Naive thymus-derived CD4-positive, alpha-beta T cell (primary cell): ENCODE measurements at regions of chr9 and their contacts with region 1.

Region 1: GRCh38 chr9:37302277-37302676 is 120.2 kb upstream of the GRHPR start:
- DNase-seq: peak in 7 of 9 donors; percentile 26 to 64 (median 54)
- ATAC-seq: peak; percentile 88
- H3K4me3 ChIP-seq: no peak overlapping the region
- H3K4me3 Mint-ChIP-seq: peak overlapping the region; percentile 64 to 78 (median 74)
- H3K27ac ChIP-seq: no peak overlapping the region
- H3K27ac Mint-ChIP-seq: peak overlapping the region; percentile 34 to 89 (median 71)
- H3K4me1 ChIP-seq: peaks cover 25 to 37% of the 10 kb centered on the region in 2 donors
- H3K4me1 Mint-ChIP-seq: peaks cover 31 to 70% (median 58%) of the 10 kb centered on the region in 7 donors
- H3K27me3 ChIP-seq: no peaks in the 10 kb centered on the region
- H3K27me3 Mint-ChIP-seq: no peaks in the 10 kb centered on the region

Region 2: GRCh38 chr9:36840898-36841536 is 461.3 kb before region 1 on chr9:
- CTCF ChIA-PET with region 1: no interaction called
- POLR2A ChIA-PET with region 1: no interaction called
- intact Hi-C with region 1: no loop called
- DNase-seq: no peak
- ATAC-seq: no peak
- H3K4me3 ChIP-seq: no peak overlapping the region
- H3K4me3 Mint-ChIP-seq: no peak overlapping the region
- H3K27ac ChIP-seq: no peak overlapping the region
- H3K27ac Mint-ChIP-seq: no peak overlapping the region
- H3K4me1 ChIP-seq: no peaks in the 10 kb centered on the region
- H3K4me1 Mint-ChIP-seq: peaks cover 0 to 5% (median 0%) of the 10 kb centered on the region in 7 donors
- H3K27me3 ChIP-seq: no peaks in the 10 kb centered on the region
- H3K27me3 Mint-ChIP-seq: peaks cover 0 to 16% (median 0%) of the 10 kb centered on the region in 5 donors

Region 3: GRCh38 chr9:36980148-36980974 is 321.9 kb before region 1 on chr9:
- CTCF ChIA-PET with region 1: no interaction called
- POLR2A ChIA-PET with region 1: no interaction called
- intact Hi-C with region 1: no loop called
- DNase-seq: no peak
- ATAC-seq: no peak
- H3K4me3 ChIP-seq: no peak overlapping the region
- H3K4me3 Mint-ChIP-seq: no peak overlapping the region
- H3K27ac ChIP-seq: no peak overlapping the region
- H3K27ac Mint-ChIP-seq: no peak overlapping the region
- H3K4me1 ChIP-seq: no peaks in the 10 kb centered on the region
- H3K4me1 Mint-ChIP-seq: peaks cover 0 to 5% (median 4%) of the 10 kb centered on the region in 7 donors
- H3K27me3 ChIP-seq: peaks cover 3% of the 10 kb centered on the region in 2 donors
- H3K27me3 Mint-ChIP-seq: peaks cover 44 to 69% (median 56%) of the 10 kb centered on the region in 5 donors

Region 4: DNA sequence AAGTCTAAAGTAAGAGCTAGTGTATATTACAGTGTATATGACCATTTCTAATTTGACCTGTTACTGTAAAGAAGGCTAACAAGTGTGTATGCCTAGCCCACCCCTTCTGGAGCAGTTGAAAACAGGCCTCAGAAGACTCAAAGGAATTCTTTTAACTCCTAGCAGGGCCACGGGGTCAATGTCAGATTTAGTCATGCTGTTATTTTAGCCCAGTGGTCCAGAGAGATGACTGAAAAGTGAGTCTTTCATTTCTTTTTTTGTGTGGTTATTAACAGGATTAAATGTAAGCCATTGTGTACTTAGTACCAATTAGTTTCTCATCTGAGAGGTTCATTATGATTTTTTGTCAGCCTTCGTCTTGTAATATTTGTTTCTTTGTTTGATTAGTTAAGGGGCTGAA is 157.5 kb before region 1 on chr9:
- CTCF ChIA-PET with region 1: no interaction called
- POLR2A ChIA-PET with region 1: no interaction called
- intact Hi-C with region 1: loop called in 1 of 2 experiments (anchors 5 kb)
- DNase-seq: no peak
- ATAC-seq: no peak
- H3K4me3 ChIP-seq: no peak overlapping the region
- H3K4me3 Mint-ChIP-seq: peak overlapping the region in 9 of 10 donors; percentile 8 to 77 (median 50)
- H3K27ac ChIP-seq: no peak overlapping the region
- H3K27ac Mint-ChIP-seq: peak overlapping the region in 8 of 9 donors; percentile 23 to 91 (median 83)
- H3K4me1 ChIP-seq: peaks cover 19 to 47% of the 10 kb centered on the region in 2 donors
- H3K4me1 Mint-ChIP-seq: peaks cover 21 to 89% (median 71%) of the 10 kb centered on the region in 7 donors
- H3K27me3 ChIP-seq: no peaks in the 10 kb centered on the region
- H3K27me3 Mint-ChIP-seq: no peaks in the 10 kb centered on the region

Region 5: DNA sequence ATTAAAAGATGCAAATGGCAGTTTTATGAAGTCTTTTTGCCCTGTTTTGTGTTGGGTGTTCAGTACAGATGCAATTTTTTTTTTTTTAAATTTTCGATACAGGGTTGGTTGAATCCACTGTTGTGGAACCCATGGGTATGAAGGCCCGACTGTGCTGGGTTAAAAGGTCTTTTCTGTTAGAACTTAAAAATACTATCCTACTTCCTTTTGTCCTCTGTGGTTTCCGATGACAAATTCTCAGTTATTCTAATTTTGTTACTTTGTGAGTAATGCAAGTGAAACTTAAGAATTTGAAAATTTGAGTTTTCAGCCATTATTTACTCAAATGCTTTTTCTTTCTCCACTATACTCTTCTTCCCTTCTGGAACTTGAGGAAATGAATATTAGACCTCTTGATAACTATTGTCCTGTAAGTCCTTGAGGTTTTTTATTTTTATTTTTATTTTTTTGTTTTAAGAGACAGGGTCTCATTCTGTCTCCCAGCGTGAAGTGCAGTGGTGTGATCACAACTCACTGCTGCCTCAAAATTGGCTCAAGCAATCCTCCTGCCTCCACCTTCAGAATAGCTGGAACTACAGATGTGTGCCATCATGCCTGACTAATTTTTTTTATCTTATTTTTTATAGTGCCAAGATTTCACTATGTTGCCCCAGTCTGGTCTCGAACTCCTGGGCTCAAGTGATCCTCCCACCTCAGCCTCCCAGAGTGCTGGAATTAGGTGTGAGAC is 114.4 kb before region 1 on chr9:
- CTCF ChIA-PET with region 1: no interaction called
- POLR2A ChIA-PET with region 1: no interaction called
- intact Hi-C with region 1: loop called (anchors 5 to 10 kb)
- DNase-seq: peak in 1 of 9 donors; percentile 3
- ATAC-seq: peak; percentile 47
- H3K4me3 ChIP-seq: no peak overlapping the region
- H3K4me3 Mint-ChIP-seq: peak overlapping the region in 9 of 10 donors; percentile 11 to 84 (median 62)
- H3K27ac ChIP-seq: no peak overlapping the region
- H3K27ac Mint-ChIP-seq: peak overlapping the region in 7 of 9 donors; percentile 17 to 85 (median 68)
- H3K4me1 ChIP-seq: peaks cover 4 to 15% of the 10 kb centered on the region in 2 donors
- H3K4me1 Mint-ChIP-seq: peaks cover 13 to 52% (median 35%) of the 10 kb centered on the region in 7 donors
- H3K27me3 ChIP-seq: no peaks in the 10 kb centered on the region
- H3K27me3 Mint-ChIP-seq: no peaks in the 10 kb centered on the region

Region 6: GRCh38 chr9:37350486-37351190 is 48.4 kb after region 1 on chr9:
- CTCF ChIA-PET with region 1: no interaction called
- POLR2A ChIA-PET with region 1: no interaction called
- intact Hi-C with region 1: no loop called
- DNase-seq: no peak
- ATAC-seq: no peak
- H3K4me3 ChIP-seq: no peak overlapping the region
- H3K4me3 Mint-ChIP-seq: no peak overlapping the region
- H3K27ac ChIP-seq: no peak overlapping the region
- H3K27ac Mint-ChIP-seq: no peak overlapping the region
- H3K4me1 ChIP-seq: no peaks in the 10 kb centered on the region
- H3K4me1 Mint-ChIP-seq: peaks cover 0 to 8% (median 0%) of the 10 kb centered on the region in 7 donors
- H3K27me3 ChIP-seq: no peaks in the 10 kb centered on the region
- H3K27me3 Mint-ChIP-seq: no peaks in the 10 kb centered on the region